Activated CD4-positive, alpha-beta memory T cell treated with anti-CD3 and anti-CD28 coated beads for 36 hours (primary cell): ENCODE measurements at regions of chr4 and their contacts with region 1.

Region 1: GRCh38 chr4:13654158-13654797 is 26.8 kb upstream of the BOD1L1 start:
- DNase-seq: peak; percentile 88
- H3K4me3 Mint-ChIP-seq: peak overlapping the region; percentile 75
- H3K27ac Mint-ChIP-seq: no peak overlapping the region
- H3K4me1 Mint-ChIP-seq: peaks cover 15% of the 10 kb centered on the region
- H3K27me3 Mint-ChIP-seq: peaks cover 2% of the 10 kb centered on the region

Region 2: GRCh38 chr4:13635286-13635799 is 18.9 kb before region 1 on chr4:
- CTCF ChIA-PET with region 1: interaction called, 42 read pairs
- POLR2A ChIA-PET with region 1: no interaction called
- intact Hi-C with region 1: no loop called
- DNase-seq: no peak
- H3K4me3 Mint-ChIP-seq: no peak overlapping the region
- H3K27ac Mint-ChIP-seq: no peak overlapping the region
- H3K4me1 Mint-ChIP-seq: no peaks in the 10 kb centered on the region
- H3K27me3 Mint-ChIP-seq: peaks cover 14% of the 10 kb centered on the region

Region 3: DNA sequence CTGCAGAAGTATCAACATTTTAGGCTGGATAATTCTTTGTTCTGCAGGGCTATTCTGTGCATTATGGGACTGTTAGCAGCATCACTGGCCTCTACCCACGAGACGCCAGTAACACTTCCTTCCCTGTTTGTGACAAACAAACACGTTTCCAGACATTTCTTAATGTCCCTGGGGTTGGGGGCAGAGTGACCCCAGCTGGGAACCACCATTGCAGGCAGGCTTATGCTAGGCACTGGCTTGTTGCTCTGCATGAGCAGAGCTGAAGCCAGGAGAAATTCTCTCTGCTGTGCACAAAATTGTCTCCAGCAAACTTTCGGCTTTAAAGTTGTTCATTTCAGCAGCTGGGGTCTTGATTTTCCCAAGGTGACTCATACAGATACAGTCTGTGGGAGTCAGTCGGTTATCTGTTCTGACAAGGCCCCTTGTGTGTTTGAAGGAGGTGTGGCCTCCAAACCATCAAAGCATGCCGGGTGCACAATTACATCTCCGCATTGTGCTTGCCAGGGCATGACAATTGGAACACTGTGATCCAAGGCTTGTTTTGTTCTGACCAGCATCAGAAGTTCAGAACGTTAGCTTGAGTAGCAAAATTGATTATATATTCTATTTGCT is 129.6 kb after region 1 on chr4:
- CTCF ChIA-PET with region 1: no interaction called
- POLR2A ChIA-PET with region 1: no interaction called
- intact Hi-C with region 1: no loop called
- DNase-seq: no peak
- H3K4me3 Mint-ChIP-seq: no peak overlapping the region
- H3K27ac Mint-ChIP-seq: no peak overlapping the region
- H3K4me1 Mint-ChIP-seq: no peaks in the 10 kb centered on the region
- H3K27me3 Mint-ChIP-seq: no peaks in the 10 kb centered on the region

Region 4: GRCh38 chr4:14178421-14178820 is 524.1 kb after region 1 on chr4:
- CTCF ChIA-PET with region 1: no interaction called
- POLR2A ChIA-PET with region 1: no interaction called
- intact Hi-C with region 1: loop called (anchors 10 kb)
- DNase-seq: no peak
- H3K4me3 Mint-ChIP-seq: no peak overlapping the region
- H3K27ac Mint-ChIP-seq: no peak overlapping the region
- H3K4me1 Mint-ChIP-seq: peaks cover 16% of the 10 kb centered on the region
- H3K27me3 Mint-ChIP-seq: no peaks in the 10 kb centered on the region

Region 5: GRCh38 chr4:14841801-14842768 is 1187.8 kb after region 1 on chr4:
- CTCF ChIA-PET with region 1: no interaction called
- POLR2A ChIA-PET with region 1: no interaction called
- intact Hi-C with region 1: loop called (anchors 5 kb)
- DNase-seq: no peak
- H3K4me3 Mint-ChIP-seq: no peak overlapping the region
- H3K27ac Mint-ChIP-seq: no peak overlapping the region
- H3K4me1 Mint-ChIP-seq: peaks cover 15% of the 10 kb centered on the region
- H3K27me3 Mint-ChIP-seq: peaks cover 1% of the 10 kb centered on the region

Region 6: DNA sequence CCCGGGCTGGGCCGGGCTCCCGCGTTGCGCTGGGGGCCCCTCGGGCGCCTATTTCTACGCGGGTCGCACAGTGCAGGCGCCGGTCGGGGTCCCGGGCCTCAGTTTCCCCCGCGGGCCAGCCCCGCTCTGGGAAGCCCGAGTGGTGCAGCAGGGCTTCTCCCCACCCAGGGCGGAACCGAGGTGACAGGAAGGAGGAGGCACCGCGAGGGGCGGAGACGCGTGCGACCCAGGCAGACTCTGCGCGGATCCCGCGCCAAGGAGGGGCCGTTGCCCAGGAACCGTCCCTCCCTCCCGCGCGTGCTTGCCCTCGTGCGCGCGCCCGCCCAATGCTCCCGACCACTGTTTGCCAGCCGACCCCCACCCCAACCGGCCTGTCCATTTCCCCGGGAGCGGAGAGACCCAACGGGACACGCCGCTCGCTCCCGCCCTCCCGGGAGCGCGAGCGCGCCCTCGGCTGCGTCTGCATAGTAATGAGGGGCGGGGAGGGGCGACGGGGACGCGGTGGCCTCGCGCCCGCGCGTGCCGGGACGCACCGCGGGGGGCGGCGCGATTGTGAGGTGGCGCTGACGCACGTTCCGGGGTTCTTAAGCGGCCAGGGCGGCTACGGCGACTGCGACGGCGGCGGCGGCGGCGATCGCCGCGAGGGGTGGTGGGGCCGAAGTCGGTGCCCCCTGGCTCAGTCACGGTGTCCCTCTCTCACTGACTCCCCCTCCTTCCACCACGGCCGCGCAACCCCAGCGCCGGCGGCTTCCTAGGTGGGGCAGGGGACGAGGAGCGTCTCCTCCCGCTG is 1347.8 kb after region 1 on chr4 and contains the start of gene CPEB2:
- CTCF ChIA-PET with region 1: no interaction called
- POLR2A ChIA-PET with region 1: no interaction called
- intact Hi-C with region 1: loop called (anchors 1 kb)
- DNase-seq: peak; percentile 93
- H3K4me3 Mint-ChIP-seq: peak within 1 kb of the TSS; percentile 87
- H3K27ac Mint-ChIP-seq: peak within 1 kb of the TSS; percentile 94
- H3K4me1 Mint-ChIP-seq: peaks cover 16% of the 10 kb centered on the region
- H3K27me3 Mint-ChIP-seq: no peaks in the 10 kb centered on the region
- total RNA-seq, gene CPEB2: 9.5 to 9.8 TPM

Region 7: DNA sequence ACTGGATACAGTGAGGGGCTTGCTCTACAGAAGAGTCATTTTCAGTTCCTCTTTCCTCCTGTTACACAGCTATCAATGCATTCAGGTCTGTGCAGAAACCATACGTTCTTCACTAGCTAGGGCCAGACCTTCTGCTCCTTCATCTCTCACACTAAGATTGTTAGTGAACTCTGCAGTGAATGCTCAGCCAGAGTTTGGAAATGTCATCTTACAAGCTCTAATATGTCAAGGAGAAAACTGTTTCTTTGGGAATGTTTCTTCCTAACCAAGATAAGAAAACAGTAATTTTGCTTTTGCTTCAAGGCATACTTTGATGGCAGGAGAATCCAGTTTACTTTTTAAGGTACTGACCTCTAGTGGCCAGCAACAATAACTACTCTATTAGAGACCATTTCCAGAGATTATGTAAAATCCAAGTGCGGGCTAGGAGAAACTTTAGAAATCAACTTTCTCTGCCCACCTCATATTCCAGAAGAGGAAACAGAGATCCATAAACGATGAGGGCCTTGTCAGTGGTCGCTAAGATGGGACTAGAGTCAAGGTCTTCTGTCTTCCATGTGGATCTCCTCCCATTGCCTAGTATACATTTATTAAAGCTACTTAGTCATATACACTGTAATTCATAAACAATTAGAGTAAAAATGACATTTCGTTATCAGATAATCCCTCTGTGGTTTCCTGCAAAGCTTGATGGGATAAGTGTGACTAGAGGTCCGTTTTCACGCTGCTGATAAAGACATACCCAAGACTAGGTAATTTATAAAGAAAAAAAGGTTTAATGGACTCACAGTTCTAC is 1803.3 kb after region 1 on chr4:
- CTCF ChIA-PET with region 1: interaction called, 5 read pairs
- POLR2A ChIA-PET with region 1: no interaction called
- intact Hi-C with region 1: loop called (anchors 5 kb)
- DNase-seq: no peak
- H3K4me3 Mint-ChIP-seq: no peak overlapping the region
- H3K27ac Mint-ChIP-seq: no peak overlapping the region
- H3K4me1 Mint-ChIP-seq: no peaks in the 10 kb centered on the region
- H3K27me3 Mint-ChIP-seq: peaks cover 3% of the 10 kb centered on the region